ENCODE measurements at regions of chr6 and their contacts with region 1.

Region 1: DNA sequence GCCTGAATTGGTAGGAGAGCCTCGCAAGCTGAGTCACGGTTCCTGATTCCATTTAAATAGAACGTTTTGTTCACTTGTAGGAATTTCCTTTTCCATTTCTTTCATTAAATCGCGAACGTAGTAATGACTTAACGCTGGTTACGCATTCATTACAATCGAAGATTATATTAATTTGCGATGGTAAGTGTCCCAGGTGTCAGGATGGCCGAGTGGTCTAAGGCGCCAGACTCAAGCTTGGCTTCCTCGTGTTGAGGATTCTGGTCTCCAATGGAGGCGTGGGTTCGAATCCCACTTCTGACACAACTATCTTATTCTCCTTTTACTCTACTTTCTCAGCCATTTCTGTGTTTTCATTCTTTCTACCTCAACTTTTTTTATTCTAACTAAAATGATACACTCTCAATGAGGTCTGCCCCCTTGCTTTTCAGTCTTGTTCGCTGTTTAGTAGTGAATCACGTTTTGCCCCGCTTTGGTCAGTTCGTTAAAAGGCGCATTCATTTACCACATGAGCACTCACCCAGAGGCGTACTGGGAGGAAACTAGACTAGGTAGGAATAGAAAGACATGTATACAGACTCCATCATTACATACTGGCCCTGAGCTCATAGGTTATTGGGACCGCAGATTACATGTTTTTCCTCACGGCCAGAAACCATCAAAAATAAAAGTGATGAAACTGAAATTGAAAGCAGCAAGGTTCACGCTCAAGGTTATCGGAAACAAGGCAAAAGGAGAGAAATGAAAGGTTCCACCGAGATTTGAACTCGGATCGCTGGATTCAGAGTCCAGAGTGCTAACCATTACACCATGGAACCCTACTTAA is 17.3 kb upstream of the TRIM27 start:
- DNase-seq: peak; percentile 49 to 94 (median 77)

Region 2: DNA sequence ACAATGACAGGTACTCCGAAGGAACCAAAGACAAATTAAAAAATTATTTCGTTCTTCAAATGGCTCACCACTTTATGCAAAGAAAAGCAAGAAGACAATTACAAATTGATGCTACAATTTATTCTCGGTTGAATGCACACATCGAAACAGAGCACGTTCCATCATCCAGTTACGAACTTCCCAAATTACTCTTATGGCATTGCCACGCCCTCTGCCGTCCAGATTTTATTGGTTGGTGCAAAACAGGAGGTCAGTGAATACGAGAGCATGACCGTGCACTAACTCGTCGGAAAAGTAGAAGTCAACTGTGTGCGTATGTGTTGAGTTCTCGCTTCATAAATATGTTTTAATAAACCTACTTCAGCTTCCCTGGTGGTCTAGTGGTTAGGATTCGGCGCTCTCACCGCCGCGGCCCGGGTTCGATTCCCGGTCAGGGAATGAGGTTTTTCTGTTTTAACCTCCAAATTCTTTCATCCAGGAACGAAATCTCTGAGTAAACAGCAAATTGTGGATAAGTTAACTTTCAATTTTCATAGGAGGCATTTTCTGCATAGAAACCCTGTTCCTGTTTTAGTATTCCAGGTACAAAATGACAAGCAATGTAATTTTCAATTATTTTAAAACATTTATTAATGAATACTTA is 40.9 kb after region 1 on chr6:
- intact Hi-C with region 1: loop called (anchors 5 kb)
- DNase-seq: peak; percentile 21 to 91 (median 73)